Activated B cell treated with CpG ODN at 0.5 μM for 24 hours (primary cell): ENCODE measurements at regions of chr11 and their contacts with region 1.

Region 1: GRCh38 chr11:134050541-134051383 is 18.1 kb upstream of the JAM3 start:
- DNase-seq: peak; percentile 66
- ATAC-seq: peak; percentile 97
- H3K4me3 Mint-ChIP-seq: no peak overlapping the region
- H3K27ac Mint-ChIP-seq: no peak overlapping the region
- H3K4me1 Mint-ChIP-seq: peaks cover 2% of the 10 kb centered on the region
- H3K27me3 Mint-ChIP-seq: peaks cover 37% of the 10 kb centered on the region
- CTCF ChIP-seq: peak; percentile 70

Region 2: GRCh38 chr11:134062265-134063123 is 11.7 kb after region 1 on chr11:
- CTCF ChIA-PET with region 1: interaction called, 14 read pairs
- POLR2A ChIA-PET with region 1: no interaction called
- intact Hi-C with region 1: no loop called
- DNase-seq: no peak
- ATAC-seq: no peak
- H3K4me3 Mint-ChIP-seq: no peak overlapping the region
- H3K27ac Mint-ChIP-seq: no peak overlapping the region
- H3K4me1 Mint-ChIP-seq: no peaks in the 10 kb centered on the region
- H3K27me3 Mint-ChIP-seq: peaks cover 33% of the 10 kb centered on the region
- CTCF ChIP-seq: no peak

Region 3: DNA sequence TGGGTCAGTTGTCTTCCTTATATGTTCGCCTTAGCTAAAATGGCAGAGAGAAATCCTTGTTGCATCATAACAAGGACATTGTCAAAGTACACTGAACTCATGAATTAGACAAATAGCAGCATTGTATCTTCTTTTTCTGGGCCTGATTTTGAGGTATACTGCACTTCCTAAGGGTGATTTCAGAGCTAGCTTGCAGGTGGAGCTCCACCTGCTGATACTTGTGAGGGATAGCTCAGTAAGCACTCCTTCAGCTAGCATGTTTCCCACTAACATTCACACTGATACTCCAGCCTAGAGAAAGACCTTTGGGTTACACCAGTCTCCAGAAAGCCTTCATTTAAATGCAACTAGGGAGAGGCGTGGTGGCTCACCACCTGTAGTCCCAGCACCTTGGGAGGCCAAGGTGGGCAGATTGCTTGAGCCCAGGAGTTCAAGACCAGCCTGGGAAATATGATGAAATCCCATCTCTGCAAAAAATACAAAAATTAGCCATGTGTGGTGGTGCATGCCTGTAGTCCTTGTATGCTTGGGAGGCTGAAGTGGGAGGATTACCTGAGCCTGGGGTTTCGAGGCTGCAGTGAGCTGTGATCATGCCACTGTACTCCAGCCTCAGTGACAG is 47.9 kb after region 1 on chr11:
- CTCF ChIA-PET with region 1: interaction called, 28 read pairs
- POLR2A ChIA-PET with region 1: interaction called, 3 read pairs
- intact Hi-C with region 1: loop called (anchors 1 kb)
- DNase-seq: no peak
- ATAC-seq: no peak
- H3K4me3 Mint-ChIP-seq: no peak overlapping the region
- H3K27ac Mint-ChIP-seq: no peak overlapping the region
- H3K4me1 Mint-ChIP-seq: peaks cover 6% of the 10 kb centered on the region
- H3K27me3 Mint-ChIP-seq: no peaks in the 10 kb centered on the region
- CTCF ChIP-seq: no peak

Region 4: DNA sequence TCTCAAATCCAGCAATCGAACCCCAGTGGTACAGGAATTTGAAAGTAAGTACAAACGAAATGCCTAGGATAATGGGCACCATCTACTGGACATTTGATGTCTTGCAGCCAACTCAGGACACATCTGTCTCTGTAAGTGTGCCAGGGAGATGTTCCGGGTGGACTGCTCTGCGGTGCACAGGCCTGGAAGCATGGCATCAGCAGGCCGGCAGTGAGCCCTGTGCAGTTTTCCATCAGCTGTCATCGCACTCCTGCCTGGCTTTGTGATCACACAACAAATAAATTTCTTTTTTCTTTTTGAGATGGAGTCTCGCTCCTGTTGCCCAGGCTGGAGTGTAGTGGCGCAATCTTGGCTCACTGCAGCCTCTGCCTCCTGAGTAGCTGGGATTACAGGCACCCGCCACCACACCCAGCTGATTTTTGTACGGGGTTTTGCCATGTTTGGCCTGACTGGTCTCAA is 89.1 kb after region 1 on chr11:
- CTCF ChIA-PET with region 1: interaction called, 40 read pairs
- POLR2A ChIA-PET with region 1: no interaction called
- intact Hi-C with region 1: loop called (anchors 1 kb)
- DNase-seq: no peak
- ATAC-seq: peak; percentile 80
- H3K4me3 Mint-ChIP-seq: no peak overlapping the region
- H3K27ac Mint-ChIP-seq: no peak overlapping the region
- H3K4me1 Mint-ChIP-seq: no peaks in the 10 kb centered on the region
- H3K27me3 Mint-ChIP-seq: no peaks in the 10 kb centered on the region
- CTCF ChIP-seq: no peak

Region 5: DNA sequence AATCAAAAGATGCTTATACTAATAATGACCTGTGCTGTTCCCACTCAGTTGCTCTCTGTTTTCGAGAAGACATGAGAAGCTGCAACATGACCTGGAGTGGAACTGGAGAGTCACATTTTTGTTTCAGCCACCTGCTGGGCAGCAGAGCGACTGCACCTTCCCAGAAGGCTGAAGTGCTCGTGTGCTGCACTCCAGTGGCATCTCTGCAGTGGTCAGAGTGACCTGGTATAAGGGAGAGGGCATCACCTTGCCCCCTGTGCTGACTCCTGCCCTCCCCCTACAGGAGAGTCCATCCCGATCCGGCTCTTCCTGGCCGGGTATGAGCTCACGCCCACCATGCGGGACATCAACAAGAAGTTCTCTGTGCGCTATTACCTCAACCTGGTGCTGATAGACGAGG is 193.9 kb after region 1 on chr11:
- CTCF ChIA-PET with region 1: interaction called, 6 read pairs
- POLR2A ChIA-PET with region 1: no interaction called
- intact Hi-C with region 1: loop called (anchors 1 kb)
- DNase-seq: no peak
- ATAC-seq: peak; percentile 84
- H3K4me3 Mint-ChIP-seq: no peak overlapping the region
- H3K27ac Mint-ChIP-seq: no peak overlapping the region
- H3K4me1 Mint-ChIP-seq: no peaks in the 10 kb centered on the region
- H3K27me3 Mint-ChIP-seq: no peaks in the 10 kb centered on the region
- CTCF ChIP-seq: no peak